H1 (cell line): ENCODE measurements at regions of chr17 and their contacts with region 1.

Region 1: GRCh38 chr17:47970704-47971463 is at the start of gene CDK5RAP3:
- DNase-seq: peak; percentile 99
- H3K4me3 ChIP-seq: peak within 1 kb of the TSS; percentile 54 to 73 (median 64)
- H3K27ac ChIP-seq: peak within 1 kb of the TSS; percentile 94
- H3K4me1 ChIP-seq: peaks cover 0 to 6% (median 3%) of the 10 kb centered on the region in 4 experiments; a peak in 6 of 7 replicates
- H3K27me3 ChIP-seq: no peaks in the 10 kb centered on the region
- CTCF ChIP-seq: peak; percentile 87 to 96 (median 96)
- EP300 ChIP-seq: peak in 1 of 2 experiments; percentile 17; a peak in 1 of 3 replicates
- POLR2A ChIP-seq: peak; percentile 66 to 91
- RAD21 ChIP-seq: peak; percentile 68 to 75; a peak in 3 of 4 replicates
- total RNA-seq, gene CDK5RAP3: 88.2 and 97.6 TPM in 2 replicates

Region 2: GRCh38 chr17:47889734-47890529 is 81.0 kb before region 1 on chr17:
- CTCF ChIA-PET with region 1: interaction called, 13 read pairs
- POLR2A ChIA-PET with region 1: no interaction called
- DNase-seq: peak; percentile 73 to 97
- H3K4me3 ChIP-seq: no peak overlapping the region
- H3K27ac ChIP-seq: no peak overlapping the region
- H3K4me1 ChIP-seq: peaks cover 0 to 9% (median 7%) of the 10 kb centered on the region in 4 experiments; a peak in 6 of 7 replicates
- H3K27me3 ChIP-seq: no peaks in the 10 kb centered on the region
- CTCF ChIP-seq: peak; percentile 87 to 98 (median 95)
- EP300 ChIP-seq: no peak
- POLR2A ChIP-seq: no peak
- RAD21 ChIP-seq: peak; percentile 99

Region 3: DNA sequence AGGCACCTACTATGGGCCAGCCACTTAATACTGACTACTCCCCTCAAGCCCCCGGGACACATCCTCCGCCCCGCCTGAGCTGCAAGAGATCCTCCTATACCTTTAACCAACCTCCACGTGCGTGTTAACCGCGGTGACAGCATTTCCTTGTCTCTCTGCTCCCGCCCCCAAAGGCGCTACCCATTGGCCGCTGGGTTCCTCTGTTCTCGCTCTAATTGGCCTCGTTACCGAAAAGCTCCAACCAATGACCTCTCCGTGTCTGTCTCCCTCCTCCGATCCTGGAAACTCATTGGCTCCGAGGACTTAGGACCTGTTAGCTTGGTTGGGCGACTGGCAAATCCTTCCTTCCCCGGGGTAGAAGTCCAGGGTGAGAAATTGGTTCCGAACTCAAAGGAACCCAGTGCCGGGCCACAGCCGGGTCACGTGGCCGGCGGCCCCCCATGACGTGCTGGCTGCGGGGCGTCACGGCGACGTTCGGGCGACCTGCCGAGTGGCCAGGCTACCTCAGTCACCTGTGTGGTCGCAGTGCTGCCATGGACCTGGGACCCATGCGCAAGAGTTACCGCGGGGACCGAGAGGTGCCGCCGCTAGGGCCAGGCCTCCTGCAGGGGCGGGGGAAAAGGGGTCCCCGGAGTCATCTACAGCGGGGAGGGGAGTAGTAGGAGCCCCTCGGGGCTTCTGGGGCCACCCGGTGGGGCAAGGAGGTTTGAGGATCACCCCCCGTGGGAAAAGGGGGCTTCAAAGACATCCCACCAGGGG is 29.5 kb before region 1 on chr17 and contains the start of gene PNPO:
- CTCF ChIA-PET with region 1: interaction called, 1,010 read pairs
- POLR2A ChIA-PET with region 1: interaction called, 5 read pairs
- DNase-seq: peak; percentile 56 to 77
- H3K4me3 ChIP-seq: peak within 1 kb of the TSS; percentile 17 to 58 (median 35); a peak in 7 of 8 replicates
- H3K27ac ChIP-seq: no peak within 1 kb of the TSS
- H3K4me1 ChIP-seq: peaks cover 0 to 1% (median 0%) of the 10 kb centered on the region in 4 experiments; a peak in 1 of 7 replicates
- H3K27me3 ChIP-seq: peaks cover 0 to 12% (median 7%) of the 10 kb centered on the region in 4 experiments; a peak in 5 of 7 replicates
- CTCF ChIP-seq: no peak
- EP300 ChIP-seq: no peak
- POLR2A ChIP-seq: no peak
- RAD21 ChIP-seq: no peak
- total RNA-seq, gene PNPO: 7.0 and 8.8 TPM in 2 replicates

Region 4: GRCh38 chr17:47987240-47987835 is 16.5 kb after region 1 on chr17:
- CTCF ChIA-PET with region 1: interaction called, 15 read pairs
- POLR2A ChIA-PET with region 1: interaction called, 6 read pairs
- DNase-seq: peak in 1 of 2 experiments; percentile 60
- H3K4me3 ChIP-seq: peak overlapping the region in 2 of 4 experiments; percentile 12 to 19; a peak in 1 of 8 replicates
- H3K27ac ChIP-seq: no peak overlapping the region
- H3K4me1 ChIP-seq: peaks cover 14 to 22% (median 18%) of the 10 kb centered on the region in 4 experiments
- H3K27me3 ChIP-seq: no peaks in the 10 kb centered on the region
- CTCF ChIP-seq: no peak
- EP300 ChIP-seq: no peak
- POLR2A ChIP-seq: no peak
- RAD21 ChIP-seq: no peak

Region 5: GRCh38 chr17:48011405-48012150 is 40.7 kb after region 1 on chr17:
- CTCF ChIA-PET with region 1: interaction called, 698 read pairs
- POLR2A ChIA-PET with region 1: interaction called, 12 read pairs
- DNase-seq: peak in 1 of 2 experiments; percentile 72
- H3K4me3 ChIP-seq: peak overlapping the region; percentile 61 to 75 (median 66)
- H3K27ac ChIP-seq: no peak overlapping the region
- H3K4me1 ChIP-seq: peaks cover 4 to 14% (median 9%) of the 10 kb centered on the region in 4 experiments
- H3K27me3 ChIP-seq: peaks cover 0 to 13% (median 8%) of the 10 kb centered on the region in 4 experiments; a peak in 6 of 7 replicates
- CTCF ChIP-seq: peak; percentile 40 to 66 (median 63)
- EP300 ChIP-seq: no peak
- POLR2A ChIP-seq: no peak
- RAD21 ChIP-seq: peak; percentile 45 to 60; a peak in 3 of 4 replicates